ENCODE measurements at regions of chr19 and their contacts with region 1.

Region 1: GRCh38 chr19:45973578-45974338 is at the start of gene NOVA2:
- DNase-seq: peak; percentile 95
- H3K4me3 ChIP-seq: peak within 1 kb of the TSS; percentile 52 to 80 (median 68)
- H3K27ac ChIP-seq: no peak within 1 kb of the TSS
- H3K4me1 ChIP-seq: peaks cover 23% of the 10 kb centered on the region
- H3K27me3 ChIP-seq: peaks cover 2 to 4% of the 10 kb centered on the region in 2 experiments
- CTCF ChIP-seq: no peak
- POLR2A ChIP-seq: no peak
- total RNA-seq, gene NOVA2: 34.2 and 35.2 TPM in 2 replicates

Region 2: GRCh38 chr19:45955905-45956608 is 17.7 kb before region 1 on chr19:
- CTCF ChIA-PET with region 1: interaction called, 7 read pairs
- POLR2A ChIA-PET with region 1: interaction called, 4 read pairs
- dilution Hi-C with region 1: no loop called
- intact Hi-C with region 1: loop called (anchors 1 kb)
- DNase-seq: peak; percentile 99
- H3K4me3 ChIP-seq: no peak overlapping the region
- H3K27ac ChIP-seq: peak overlapping the region; percentile 85
- H3K4me1 ChIP-seq: peaks cover 43% of the 10 kb centered on the region
- H3K27me3 ChIP-seq: no peaks in the 10 kb centered on the region
- CTCF ChIP-seq: no peak
- POLR2A ChIP-seq: peak; percentile 65

Region 3: DNA sequence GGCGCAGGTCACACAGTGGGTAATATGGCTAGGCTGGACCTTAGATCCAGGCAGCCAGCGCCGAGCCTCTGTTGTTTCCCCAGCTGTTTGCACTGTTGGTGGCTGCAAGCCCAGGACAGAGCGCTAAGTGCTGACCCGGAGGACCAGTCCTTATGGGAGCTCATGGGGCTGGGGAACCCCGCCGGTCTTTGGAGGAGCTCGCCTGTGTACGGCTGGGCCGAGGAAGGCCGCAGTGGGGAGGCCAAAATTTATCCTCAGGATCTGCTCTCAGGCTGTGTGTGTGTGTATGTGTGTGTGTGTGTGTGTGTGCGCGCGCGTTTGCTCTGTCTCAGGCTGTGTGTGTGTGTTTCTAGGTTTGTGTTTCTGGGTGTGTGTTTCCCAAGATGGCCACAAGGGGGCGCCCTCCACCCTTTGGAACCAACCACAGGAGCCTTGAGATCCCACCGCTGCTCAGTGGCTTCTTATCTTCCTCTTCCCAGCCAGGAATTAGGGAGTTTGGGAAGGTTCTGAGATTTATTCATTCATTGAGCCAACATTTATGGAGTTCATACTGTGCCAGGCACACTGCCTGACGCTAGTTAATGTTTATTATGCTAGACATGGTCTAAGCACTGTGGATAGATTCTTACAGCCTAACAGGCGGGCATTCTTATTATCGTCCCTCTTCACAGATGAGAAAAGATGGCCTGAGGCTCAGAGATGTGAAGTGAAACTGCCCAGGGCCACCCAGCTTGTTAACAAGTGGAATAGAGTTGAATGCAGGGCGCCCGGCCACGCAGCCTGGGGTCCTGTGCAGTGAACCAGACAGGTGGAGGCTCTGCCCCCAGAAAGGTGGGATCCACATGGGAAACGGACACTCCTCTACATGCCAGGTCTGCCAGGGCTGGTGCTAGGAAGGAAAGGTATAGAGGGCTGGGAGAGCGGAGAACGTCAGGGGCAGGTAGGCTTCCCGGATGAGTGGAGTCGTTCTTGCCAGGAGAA is 36.1 kb after region 1 on chr19:
- CTCF ChIA-PET with region 1: interaction called, 6 read pairs
- POLR2A ChIA-PET with region 1: no interaction called
- dilution Hi-C with region 1: no loop called
- intact Hi-C with region 1: loop called (anchors 5 kb)
- DNase-seq: peak; percentile 76
- H3K4me3 ChIP-seq: no peak overlapping the region
- H3K27ac ChIP-seq: no peak overlapping the region
- H3K4me1 ChIP-seq: no peaks in the 10 kb centered on the region
- H3K27me3 ChIP-seq: no peaks in the 10 kb centered on the region
- CTCF ChIP-seq: peak; percentile 80 to 92
- POLR2A ChIP-seq: no peak